ENCODE measurements at regions of chr6 and their contacts with region 1.

Region 1: GRCh38 chr6:159862103-159862502 is 28.7 kb upstream of the MAS1 start:
- DNase-seq: no peak
- ATAC-seq: no peak
- H3K4me3 ChIP-seq: no peak overlapping the region
- H3K27ac ChIP-seq: no peak overlapping the region
- H3K4me1 ChIP-seq: no peaks in the 10 kb centered on the region
- H3K27me3 ChIP-seq: no peaks in the 10 kb centered on the region
- CTCF ChIP-seq: no peak
- POLR2A ChIP-seq: no peak

Region 2: DNA sequence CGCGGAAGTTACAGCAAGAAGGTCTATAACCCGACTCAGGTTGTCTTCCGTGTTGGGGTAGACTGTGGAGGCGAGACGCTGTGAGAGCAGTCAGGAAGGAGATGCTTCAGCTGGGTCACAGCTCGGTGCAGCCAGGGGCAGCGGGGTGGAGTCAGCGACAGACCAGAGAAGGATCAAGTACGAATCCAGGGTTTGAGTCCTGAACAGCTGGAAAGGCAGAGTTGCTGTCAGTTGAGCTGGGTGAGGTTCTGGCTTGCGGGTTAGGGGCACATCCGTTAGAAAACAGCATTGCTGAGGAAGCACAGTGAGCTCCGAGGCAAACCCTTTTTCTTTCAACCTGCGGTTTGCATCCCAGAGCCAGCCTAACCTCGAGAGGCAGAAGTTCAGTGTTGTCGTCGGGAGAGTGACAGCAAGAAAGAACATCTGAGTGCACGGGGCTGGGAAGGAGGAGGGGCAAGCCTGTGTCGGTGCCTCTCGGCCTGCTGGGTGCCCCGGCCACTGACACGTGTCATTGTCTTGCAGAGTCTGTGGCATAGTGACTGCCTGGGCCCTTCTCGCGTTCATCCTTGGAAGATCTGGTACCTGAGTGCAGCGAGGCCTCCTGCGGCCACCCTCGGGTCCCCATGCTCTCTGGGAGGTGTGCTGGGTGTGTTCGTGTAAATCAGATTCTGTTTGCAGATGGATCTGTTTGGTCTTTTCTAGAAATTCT is 42.0 kb before region 1 on chr6:
- intact Hi-C with region 1: no loop called
- DNase-seq: no peak
- ATAC-seq: no peak
- H3K4me3 ChIP-seq: peak overlapping the region in 1 of 12 donors; percentile 4
- H3K27ac ChIP-seq: no peak overlapping the region
- H3K4me1 ChIP-seq: no peaks in the 10 kb centered on the region
- H3K27me3 ChIP-seq: no peaks in the 10 kb centered on the region
- CTCF ChIP-seq: no peak
- POLR2A ChIP-seq: no peak

Region 3: GRCh38 chr6:159935065-159935464 is 73.0 kb after region 1 on chr6:
- intact Hi-C with region 1: loop called (anchors 2 to 5 kb)
- DNase-seq: no peak
- ATAC-seq: peak in 3 of 4 donors; percentile 39 to 74 (median 43)
- H3K4me3 ChIP-seq: no peak overlapping the region
- H3K27ac ChIP-seq: no peak overlapping the region
- H3K4me1 ChIP-seq: peaks cover 0 to 16% (median 5%) of the 10 kb centered on the region in 12 donors
- H3K27me3 ChIP-seq: no peaks in the 10 kb centered on the region
- CTCF ChIP-seq: no peak
- POLR2A ChIP-seq: no peak

Region 4: GRCh38 chr6:159979136-159979874 is 117.2 kb after region 1 on chr6:
- intact Hi-C with region 1: no loop called
- DNase-seq: peak in 2 of 5 donors; percentile 47 to 70
- ATAC-seq: peak in 3 of 4 donors; percentile 39 to 71 (median 63)
- H3K4me3 ChIP-seq: no peak overlapping the region
- H3K27ac ChIP-seq: peak overlapping the region in 11 of 12 donors; percentile 59 to 86 (median 77)
- H3K4me1 ChIP-seq: peaks cover 21 to 98% (median 77%) of the 10 kb centered on the region in 12 donors
- H3K27me3 ChIP-seq: no peaks in the 10 kb centered on the region
- CTCF ChIP-seq: no peak
- POLR2A ChIP-seq: no peak

Region 5: DNA sequence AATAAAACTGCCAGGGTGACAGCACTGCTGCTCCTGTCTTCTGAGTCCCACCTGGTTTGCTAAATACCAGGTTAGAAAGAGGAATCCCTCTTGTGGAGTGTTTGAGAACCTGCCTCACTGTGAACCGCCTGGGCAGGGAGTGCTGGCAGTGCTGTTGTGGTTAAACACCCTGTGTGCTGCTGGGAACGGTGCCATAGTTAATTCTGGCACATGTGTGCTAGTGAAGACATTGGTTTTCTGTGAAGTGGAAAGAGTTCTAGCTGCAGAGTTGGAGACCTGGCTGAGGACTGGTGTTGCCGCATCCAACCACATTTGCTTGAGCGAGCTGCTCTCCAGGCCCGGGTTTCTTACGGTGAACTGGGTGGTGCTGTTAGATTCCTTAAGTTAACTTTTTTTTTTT is 179.5 kb after region 1 on chr6:
- intact Hi-C with region 1: loop called in 4 of 10 experiments (anchors 10 kb)
- DNase-seq: peak in 4 of 5 donors; percentile 38 to 84 (median 66)
- ATAC-seq: peak; percentile 78 to 93 (median 84)
- H3K4me3 ChIP-seq: no peak overlapping the region
- H3K27ac ChIP-seq: no peak overlapping the region
- H3K4me1 ChIP-seq: peaks cover 0 to 51% (median 14%) of the 10 kb centered on the region in 12 donors
- H3K27me3 ChIP-seq: no peaks in the 10 kb centered on the region
- CTCF ChIP-seq: peak in 5 of 12 donors; percentile 21 to 33 (median 31)
- POLR2A ChIP-seq: no peak

Region 6: DNA sequence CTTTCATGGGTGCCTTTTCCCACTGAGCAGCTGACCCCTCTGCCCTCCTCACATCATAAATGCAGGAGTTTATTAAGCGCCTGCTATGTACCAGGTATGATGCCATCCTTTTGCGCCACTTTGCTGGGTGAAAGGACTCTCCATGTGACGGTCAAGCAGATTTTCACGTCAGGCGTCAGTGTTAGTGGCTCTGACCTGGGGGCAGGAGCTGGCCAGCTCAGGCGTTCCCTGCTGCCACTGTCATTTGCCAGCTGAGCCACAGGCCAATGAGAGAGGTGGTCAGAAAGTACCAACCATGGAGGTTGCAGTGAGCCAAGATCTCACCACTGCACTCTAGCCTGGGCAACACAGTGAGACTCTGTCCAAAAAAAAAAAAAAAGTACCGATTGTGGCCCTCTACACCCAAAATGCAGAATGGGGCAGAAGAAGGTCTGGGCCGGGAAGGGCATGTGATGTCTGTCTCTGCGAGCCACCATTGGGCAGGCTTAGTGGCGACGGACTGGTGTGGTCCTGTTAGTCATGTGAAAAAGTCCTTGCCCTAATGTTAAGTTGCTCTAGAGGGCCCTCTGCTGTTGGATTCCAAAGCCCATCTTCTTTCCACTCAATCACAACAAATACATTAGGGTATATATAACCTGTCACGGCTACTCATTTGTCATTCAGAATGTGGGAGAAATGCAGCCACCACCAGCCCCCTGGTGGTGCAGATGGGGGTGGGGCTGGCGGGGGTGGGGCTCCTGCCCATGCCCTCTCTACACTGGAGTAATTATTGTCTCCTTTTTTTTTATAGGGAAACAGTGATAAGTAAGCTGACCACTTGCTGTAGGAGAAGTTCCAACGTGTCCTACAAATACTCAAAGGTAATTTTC is 241.1 kb after region 1 on chr6:
- intact Hi-C with region 1: loop called in 1 of 10 experiments (anchors 10 kb)
- DNase-seq: no peak
- ATAC-seq: peak in 1 of 4 donors; percentile 41
- H3K4me3 ChIP-seq: no peak overlapping the region
- H3K27ac ChIP-seq: no peak overlapping the region
- H3K4me1 ChIP-seq: peaks cover 0 to 20% (median 0%) of the 10 kb centered on the region in 12 donors
- H3K27me3 ChIP-seq: no peaks in the 10 kb centered on the region
- CTCF ChIP-seq: peak in 7 of 12 donors; percentile 15 to 44 (median 30)
- POLR2A ChIP-seq: no peak

Region 7: GRCh38 chr6:160534050-160534696 is 672.1 kb after region 1 on chr6:
- intact Hi-C with region 1: loop called in 6 of 10 experiments (anchors 10 kb)
- DNase-seq: peak; percentile 31 to 67 (median 34)
- ATAC-seq: peak; percentile 42 to 68 (median 56)
- H3K4me3 ChIP-seq: peak overlapping the region in 5 of 12 donors; percentile 8 to 42 (median 11)
- H3K27ac ChIP-seq: no peak overlapping the region
- H3K4me1 ChIP-seq: peaks cover 0 to 6% (median 0%) of the 10 kb centered on the region in 12 donors
- H3K27me3 ChIP-seq: peaks cover 0 to 4% (median 0%) of the 10 kb centered on the region in 9 donors
- CTCF ChIP-seq: peak; percentile 80 to 96 (median 90)
- POLR2A ChIP-seq: no peak